ENCODE measurements at regions of chr22 and their contacts with region 1.

Region 1: GRCh38 chr22:24525416-24526037 is 29.4 kb downstream of the GUCD1 start:
- DNase-seq: peak; percentile 58
- ATAC-seq: peak; percentile 85
- H3K4me3 ChIP-seq: no peak overlapping the region
- H3K27ac ChIP-seq: no peak overlapping the region
- H3K4me1 ChIP-seq: no peaks in the 10 kb centered on the region; the same call in 1 of the 2 replicates
- H3K27me3 ChIP-seq: no peaks in the 10 kb centered on the region
- CTCF ChIP-seq: peak; percentile 86

Region 2: GRCh38 chr22:24429411-24430365 is 95.8 kb before region 1 on chr22:
- CTCF ChIA-PET with region 1: no interaction called
- POLR2A ChIA-PET with region 1: no interaction called
- in situ Hi-C with region 1: no loop called
- intact Hi-C with region 1: loop called (anchors 5 kb)
- DNase-seq: no peak
- ATAC-seq: no peak
- H3K4me3 ChIP-seq: no peak overlapping the region
- H3K27ac ChIP-seq: no peak overlapping the region
- H3K4me1 ChIP-seq: peaks cover 8% of the 10 kb centered on the region; the same call in 1 of the 2 replicates
- H3K27me3 ChIP-seq: no peaks in the 10 kb centered on the region
- CTCF ChIP-seq: no peak

Region 3: DNA sequence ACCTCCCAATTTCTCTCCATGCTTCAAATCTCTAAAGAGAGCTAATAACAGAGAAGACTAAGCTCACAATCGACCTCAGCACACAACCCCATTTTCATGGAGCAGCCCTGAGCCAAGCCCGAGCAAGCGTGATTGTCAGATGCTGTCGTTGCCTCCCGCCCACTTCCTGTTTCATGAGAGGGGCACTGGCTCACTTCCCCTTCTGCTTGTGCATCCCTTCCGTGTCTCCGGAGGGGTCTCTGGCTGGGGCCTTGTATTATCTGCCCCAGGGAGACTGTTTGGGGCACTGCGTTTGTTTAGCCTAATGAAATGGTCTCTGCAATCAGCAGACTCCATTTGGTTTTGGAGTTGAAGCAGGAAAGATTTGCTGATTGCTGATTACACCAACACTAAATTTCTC is 1462.4 kb after region 1 on chr22:
- CTCF ChIA-PET with region 1: no interaction called
- POLR2A ChIA-PET with region 1: no interaction called
- in situ Hi-C with region 1: no loop called
- intact Hi-C with region 1: no loop called
- DNase-seq: no peak
- ATAC-seq: no peak
- H3K4me3 ChIP-seq: no peak overlapping the region
- H3K27ac ChIP-seq: no peak overlapping the region
- H3K4me1 ChIP-seq: no peaks in the 10 kb centered on the region
- H3K27me3 ChIP-seq: no peaks in the 10 kb centered on the region; the same call in 1 of the 2 replicates
- CTCF ChIP-seq: no peak

Measured in Panc1 (cell line).